K562 (cell line): ENCODE measurements at regions of chr5 and their contacts with region 1.

Region 1: DNA sequence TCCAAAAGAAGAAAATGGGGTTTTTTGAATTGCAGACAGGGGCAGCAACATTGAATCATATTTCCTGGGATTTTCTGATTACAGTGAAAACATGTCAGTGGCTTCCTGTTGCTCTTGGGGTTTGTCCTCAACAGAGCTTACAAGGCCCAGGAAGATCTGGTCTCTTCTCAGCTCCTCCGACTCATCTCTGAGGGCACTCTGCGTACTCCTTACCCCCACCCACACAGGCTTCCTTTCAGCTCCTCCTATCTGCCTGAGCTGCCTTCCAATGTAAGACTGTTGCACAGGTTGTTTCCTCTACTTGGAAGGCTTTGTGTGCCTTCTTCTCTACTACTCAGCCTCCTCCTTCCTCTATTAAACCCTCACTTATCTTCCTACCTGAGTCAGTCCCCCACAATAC is 245.1 kb upstream of the MEF2C start:
- DNase-seq: peak; percentile 12 to 84 (median 42)
- ATAC-seq: peak; percentile 92
- H3K4me3 ChIP-seq: no peak overlapping the region
- H3K27ac ChIP-seq: peak overlapping the region; percentile 7; the same call in 2 of the 3 replicates
- H3K4me1 ChIP-seq: peaks cover 4 to 46% of the 10 kb centered on the region in 2 experiments; a peak in 4 of 5 replicates
- H3K27me3 ChIP-seq: no peaks in the 10 kb centered on the region
- CTCF ChIP-seq: no peak
- EP300 ChIP-seq: no peak; the same call in 1 of the 2 replicates
- POLR2A ChIP-seq: no peak
- RAD21 ChIP-seq: 0 out of 4 replicates have a peak, but pooled peaks have one; percentile 7 to 11

Region 2: GRCh38 chr5:88826646-88827585 is 301.2 kb before region 1 on chr5:
- CTCF ChIA-PET with region 1: no interaction called
- POLR2A ChIA-PET with region 1: no interaction called
- in situ Hi-C with region 1: no loop called
- intact Hi-C with region 1: loop called (anchors 5 kb)
- DNase-seq: peak; percentile 17 to 72 (median 38)
- ATAC-seq: peak; percentile 80
- H3K4me3 ChIP-seq: no peak overlapping the region
- H3K27ac ChIP-seq: peak overlapping the region; percentile 69; the same call in 2 of the 3 replicates
- H3K4me1 ChIP-seq: peaks cover 0 to 16% of the 10 kb centered on the region in 2 experiments; a peak in 3 of 5 replicates
- H3K27me3 ChIP-seq: no peaks in the 10 kb centered on the region
- CTCF ChIP-seq: no peak
- EP300 ChIP-seq: peak; percentile 6; the same call in 1 of the 2 replicates
- POLR2A ChIP-seq: no peak
- RAD21 ChIP-seq: no peak

Region 3: GRCh38 chr5:89147031-89147430 is 18.9 kb after region 1 on chr5:
- CTCF ChIA-PET with region 1: no interaction called
- POLR2A ChIA-PET with region 1: no interaction called
- in situ Hi-C with region 1: no loop called
- intact Hi-C with region 1: loop called (anchors 1 kb)
- DNase-seq: no peak
- ATAC-seq: no peak
- H3K4me3 ChIP-seq: no peak overlapping the region
- H3K27ac ChIP-seq: no peak overlapping the region
- H3K4me1 ChIP-seq: no peaks in the 10 kb centered on the region
- H3K27me3 ChIP-seq: no peaks in the 10 kb centered on the region
- CTCF ChIP-seq: no peak
- EP300 ChIP-seq: no peak
- POLR2A ChIP-seq: no peak
- RAD21 ChIP-seq: no peak

Region 4: GRCh38 chr5:89168766-89169165 is 40.7 kb after region 1 on chr5:
- CTCF ChIA-PET with region 1: no interaction called
- POLR2A ChIA-PET with region 1: no interaction called
- in situ Hi-C with region 1: no loop called
- intact Hi-C with region 1: no loop called
- DNase-seq: no peak
- ATAC-seq: no peak
- H3K4me3 ChIP-seq: no peak overlapping the region
- H3K27ac ChIP-seq: no peak overlapping the region
- H3K4me1 ChIP-seq: peaks cover 0 to 2% of the 10 kb centered on the region in 2 experiments; a peak in 2 of 5 replicates
- H3K27me3 ChIP-seq: no peaks in the 10 kb centered on the region
- CTCF ChIP-seq: no peak
- EP300 ChIP-seq: no peak
- POLR2A ChIP-seq: no peak
- RAD21 ChIP-seq: no peak